AG04449 (cell line): ENCODE measurements at regions of chr15 and their contacts with region 1.

Region 1: GRCh38 chr15:81265944-81266775 is 57.8 kb downstream of the STARD5 start:
- DNase-seq: no peak
- H3K4me3 ChIP-seq: peak overlapping the region; percentile 23
- CTCF ChIP-seq: peak; percentile 89

Region 2: DNA sequence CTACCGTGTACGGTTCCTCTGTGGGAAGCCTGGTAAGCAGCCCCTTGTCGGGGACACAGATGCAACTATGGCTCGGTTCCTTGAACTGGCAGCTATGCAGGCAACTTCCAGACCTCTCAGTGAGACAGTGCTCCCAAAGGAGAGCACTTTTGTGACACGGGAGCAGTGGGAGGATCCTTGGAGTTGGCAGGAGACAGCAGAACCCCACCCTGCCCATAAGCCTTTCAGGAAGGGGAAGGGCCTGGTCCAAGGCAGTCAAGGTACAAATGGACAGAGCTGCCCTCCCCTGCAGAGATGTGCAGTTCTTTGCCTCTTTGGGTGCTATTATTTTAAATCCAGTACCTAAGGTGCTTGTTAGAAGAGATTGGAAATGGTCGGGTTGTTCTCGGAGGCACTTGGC is 371.1 kb before region 1 on chr15:
- CTCF ChIA-PET with region 1: no interaction called
- POLR2A ChIA-PET with region 1: no interaction called
- DNase-seq: no peak
- H3K4me3 ChIP-seq: no peak overlapping the region
- CTCF ChIP-seq: no peak

Region 3: GRCh38 chr15:80989518-80990478 is 276.4 kb before region 1 on chr15 and contains the start of gene MESD:
- CTCF ChIA-PET with region 1: interaction called, 34 read pairs
- POLR2A ChIA-PET with region 1: no interaction called
- DNase-seq: peak; percentile 46
- H3K4me3 ChIP-seq: peak within 1 kb of the TSS; percentile 90
- CTCF ChIP-seq: no peak

Region 4: GRCh38 chr15:81080996-81081395 is 185.2 kb before region 1 on chr15:
- CTCF ChIA-PET with region 1: interaction called, 16 read pairs
- POLR2A ChIA-PET with region 1: no interaction called
- DNase-seq: no peak
- H3K4me3 ChIP-seq: no peak overlapping the region
- CTCF ChIP-seq: no peak

Region 5: DNA sequence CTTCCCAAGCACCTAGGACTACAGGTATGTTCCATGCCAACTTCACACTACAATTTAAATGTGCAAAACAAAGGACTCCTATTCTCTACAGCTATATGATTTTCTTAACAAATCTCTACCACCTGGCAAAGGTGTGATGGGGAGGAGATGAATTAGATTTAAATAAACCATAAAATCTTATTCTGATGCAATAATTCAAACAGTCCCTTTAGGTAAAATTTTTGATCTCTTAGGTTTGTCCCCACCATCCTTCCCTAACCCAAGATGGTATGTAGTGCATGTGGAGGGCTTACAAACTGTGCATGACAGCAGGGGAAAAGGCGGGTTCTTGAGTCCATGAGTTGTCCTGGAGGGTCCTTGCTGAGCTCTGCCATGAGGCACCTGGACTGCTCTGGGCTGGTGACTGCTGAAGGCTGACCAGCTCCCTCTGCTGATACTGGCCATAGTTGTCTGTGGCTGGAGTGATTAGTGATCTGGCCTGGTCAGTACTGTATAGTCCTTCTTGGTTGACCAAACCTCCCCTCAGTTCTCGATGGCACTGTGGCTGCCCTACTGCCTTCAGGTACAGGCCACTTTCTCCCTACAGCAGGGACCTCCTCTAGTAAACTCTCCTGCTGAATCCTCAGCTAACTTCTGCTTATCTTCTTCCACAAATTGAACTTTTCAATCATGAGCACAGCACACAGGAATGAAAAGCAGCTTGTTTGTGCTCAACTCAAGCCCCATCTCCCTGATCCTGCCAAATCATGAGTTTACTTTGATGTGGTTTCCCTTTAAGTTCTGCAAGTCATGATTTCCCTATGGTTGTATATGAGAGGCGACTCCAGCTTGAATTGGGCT is 102.0 kb before region 1 on chr15:
- CTCF ChIA-PET with region 1: interaction called, 108 read pairs
- POLR2A ChIA-PET with region 1: no interaction called
- DNase-seq: peak; percentile 72
- H3K4me3 ChIP-seq: no peak overlapping the region
- CTCF ChIP-seq: peak; percentile 5

Region 6: GRCh38 chr15:81244306-81244705 is 21.9 kb before region 1 on chr15:
- CTCF ChIA-PET with region 1: interaction called, 111 read pairs
- POLR2A ChIA-PET with region 1: no interaction called
- DNase-seq: no peak
- H3K4me3 ChIP-seq: no peak overlapping the region
- CTCF ChIP-seq: no peak

Region 7: DNA sequence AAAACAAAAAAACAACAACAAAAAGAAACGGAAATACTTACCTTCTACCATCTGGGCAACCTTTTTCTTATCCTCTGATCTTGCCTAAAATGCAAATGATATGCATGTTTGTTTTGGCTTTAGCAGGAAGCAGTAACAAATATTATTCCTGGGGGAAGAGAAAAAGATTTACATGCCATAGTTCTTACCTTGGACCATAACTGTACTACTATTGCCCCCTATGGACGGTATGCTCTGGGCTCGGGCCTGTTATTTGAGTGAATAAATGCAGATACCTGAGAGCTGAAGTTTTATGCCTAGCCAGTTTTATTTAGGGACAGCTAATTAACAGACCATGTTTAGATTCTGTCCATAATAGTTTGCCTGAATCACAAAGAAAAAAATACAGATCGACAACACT is 70.4 kb after region 1 on chr15:
- CTCF ChIA-PET with region 1: interaction called, 15 read pairs
- POLR2A ChIA-PET with region 1: no interaction called
- DNase-seq: no peak
- H3K4me3 ChIP-seq: no peak overlapping the region
- CTCF ChIP-seq: peak; percentile 37

Region 8: GRCh38 chr15:81473177-81473576 is 207.0 kb after region 1 on chr15:
- CTCF ChIA-PET with region 1: no interaction called
- POLR2A ChIA-PET with region 1: no interaction called
- DNase-seq: no peak
- H3K4me3 ChIP-seq: no peak overlapping the region
- CTCF ChIP-seq: no peak